ENCODE measurements at regions of chr12 and their contacts with region 1.

Region 1: DNA sequence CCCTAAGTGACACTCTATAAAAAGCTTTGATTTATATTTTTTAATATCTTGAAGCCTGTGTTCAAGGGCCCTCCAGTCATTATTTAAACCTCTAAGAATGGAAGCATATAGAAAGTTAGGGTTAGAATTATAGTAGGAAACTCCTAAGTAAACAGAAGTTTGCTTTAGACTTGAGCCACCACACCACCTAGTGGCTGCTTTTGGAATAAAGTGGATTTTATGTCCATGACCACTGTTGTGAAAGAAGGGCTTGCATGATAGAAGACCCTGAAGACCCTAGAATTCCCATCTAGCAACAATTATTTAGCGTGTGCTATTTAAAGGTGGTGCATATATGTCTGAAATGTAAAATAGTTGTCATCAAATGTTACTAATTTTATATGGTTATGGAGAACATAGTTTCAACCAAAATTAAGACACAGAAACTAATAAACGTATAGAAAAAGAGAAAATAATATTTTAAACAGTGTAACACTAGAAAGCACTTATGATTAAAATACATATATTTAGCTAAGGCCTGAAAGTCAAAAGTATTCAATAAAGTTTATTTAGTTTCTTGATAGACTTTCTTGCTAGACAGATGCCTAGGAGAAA is 21.3 kb downstream of the LRRIQ1 start:
- DNase-seq: peak; percentile 58
- H3K4me3 ChIP-seq: no peak overlapping the region
- H3K27ac ChIP-seq: no peak overlapping the region
- H3K4me1 ChIP-seq: no peaks in the 10 kb centered on the region
- H3K27me3 ChIP-seq: peaks cover 4 to 17% of the 10 kb centered on the region in 2 experiments
- CTCF ChIP-seq: peak; percentile 52 to 68
- POLR2A ChIP-seq: no peak

Region 2: DNA sequence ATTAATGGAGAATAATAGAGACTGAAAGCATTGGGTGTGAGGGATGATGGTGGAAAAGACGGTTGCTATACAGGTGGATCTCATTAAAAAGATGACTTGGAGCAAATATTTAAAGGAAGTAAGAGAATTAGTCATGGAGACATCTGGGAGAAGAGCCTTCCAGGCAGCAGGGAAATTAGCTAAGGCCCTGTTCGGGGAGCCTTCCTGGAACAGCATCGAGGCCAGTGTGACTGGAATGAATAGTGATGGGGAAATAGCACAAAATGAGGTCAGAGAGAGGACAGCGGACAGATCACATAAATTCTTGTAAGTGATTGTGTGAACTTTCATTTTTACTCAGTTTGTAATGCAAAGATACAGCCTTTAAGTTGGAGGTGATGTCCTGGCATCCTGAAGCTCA is 987.2 kb before region 1 on chr12:
- CTCF ChIA-PET with region 1: no interaction called
- POLR2A ChIA-PET with region 1: no interaction called
- dilution Hi-C with region 1: no loop called
- intact Hi-C with region 1: no loop called
- DNase-seq: no peak
- H3K4me3 ChIP-seq: no peak overlapping the region
- H3K27ac ChIP-seq: no peak overlapping the region
- H3K4me1 ChIP-seq: no peaks in the 10 kb centered on the region
- H3K27me3 ChIP-seq: no peaks in the 10 kb centered on the region
- CTCF ChIP-seq: no peak
- POLR2A ChIP-seq: no peak

Region 3: GRCh38 chr12:85043821-85044220 is 13.6 kb before region 1 on chr12:
- CTCF ChIA-PET with region 1: interaction called, 14 read pairs
- POLR2A ChIA-PET with region 1: no interaction called
- dilution Hi-C with region 1: no loop called
- intact Hi-C with region 1: no loop called
- DNase-seq: no peak
- H3K4me3 ChIP-seq: no peak overlapping the region
- H3K27ac ChIP-seq: no peak overlapping the region
- H3K4me1 ChIP-seq: no peaks in the 10 kb centered on the region
- H3K27me3 ChIP-seq: no peaks in the 10 kb centered on the region
- CTCF ChIP-seq: no peak
- POLR2A ChIP-seq: no peak